OCI-LY7 (cell line): ENCODE measurements at regions of chr7 and their contacts with region 1.

Region 1: DNA sequence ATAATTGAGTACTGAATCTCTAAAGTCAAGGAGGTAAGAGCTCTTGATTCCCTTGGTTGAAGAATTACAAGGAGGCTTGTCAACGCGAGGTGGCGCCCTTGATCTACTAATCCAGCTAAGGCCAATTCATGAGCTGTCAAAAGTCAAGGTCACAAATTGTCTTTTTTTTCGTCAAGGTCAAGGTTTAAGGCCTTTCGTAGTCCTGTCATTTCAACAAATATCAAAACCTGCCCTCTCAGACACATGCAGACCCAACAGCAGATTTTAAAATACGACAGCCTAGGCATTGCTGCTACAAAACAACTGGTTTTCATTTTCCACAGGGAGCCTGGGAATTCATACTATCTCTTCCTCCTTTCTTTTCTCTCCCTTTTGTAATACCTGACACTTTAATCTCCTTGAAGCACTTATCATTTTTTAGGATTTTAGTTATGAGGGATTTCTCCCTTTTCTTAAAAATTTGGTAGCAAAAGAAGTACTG is 3.6 kb downstream of the HOXA13 start:
- DNase-seq: peak; percentile 74
- H3K4me3 ChIP-seq: no peak overlapping the region
- H3K27ac ChIP-seq: no peak overlapping the region
- H3K4me1 ChIP-seq: peaks cover 11% of the 10 kb centered on the region
- CTCF ChIP-seq: peak; percentile 96

Region 2: DNA sequence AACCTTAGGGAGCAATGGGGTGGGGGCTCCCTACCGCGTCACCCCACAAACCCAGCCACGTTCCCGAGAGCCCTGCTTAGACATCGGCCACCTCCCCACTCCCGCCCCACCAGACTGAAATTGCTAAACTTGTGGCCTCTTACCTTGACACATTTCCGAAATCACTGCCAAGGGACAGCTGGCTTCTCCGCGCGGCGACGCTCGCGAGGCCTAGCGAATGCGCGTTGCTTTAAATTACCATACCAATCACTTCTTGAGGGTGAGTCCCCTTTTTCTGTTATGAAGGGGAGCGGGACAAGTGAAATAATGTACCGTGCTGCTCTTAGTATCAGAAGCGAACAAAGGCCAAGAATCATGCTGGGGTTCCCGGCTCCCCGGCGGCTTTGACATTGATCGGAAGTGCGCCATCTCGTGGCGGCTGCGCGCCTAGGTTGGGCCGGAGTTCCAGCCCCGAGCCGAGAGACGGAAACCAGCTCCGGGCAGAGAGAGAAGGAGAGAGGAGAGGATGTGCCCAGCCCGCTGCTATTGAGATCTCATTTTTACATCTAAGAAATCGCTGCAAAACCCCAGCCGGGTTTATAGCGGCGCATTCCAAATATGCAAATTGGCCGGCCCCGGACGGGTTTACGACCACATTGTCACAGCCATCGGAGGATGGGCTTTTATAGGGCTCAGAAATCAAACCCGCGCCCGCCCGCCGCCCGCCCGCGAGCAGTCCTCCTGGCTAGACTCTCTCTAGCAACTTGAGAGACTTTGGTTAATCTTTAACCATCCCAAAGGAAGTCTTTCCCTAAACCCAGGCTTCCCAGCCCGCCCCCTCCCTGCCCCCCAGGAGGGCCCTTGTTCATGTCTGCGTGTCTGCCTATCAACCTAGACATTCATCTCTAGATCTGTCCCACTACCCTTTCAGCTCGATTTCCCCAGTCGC is 16.6 kb before region 1 on chr7:
- CTCF ChIA-PET with region 1: no interaction called
- POLR2A ChIA-PET with region 1: no interaction called
- intact Hi-C with region 1: no loop called
- DNase-seq: peak; percentile 64
- H3K4me3 ChIP-seq: peak overlapping the region; percentile 49
- H3K27ac ChIP-seq: no peak overlapping the region
- H3K4me1 ChIP-seq: no peaks in the 10 kb centered on the region
- CTCF ChIP-seq: peak; percentile 97

Region 3: GRCh38 chr7:27210441-27211083 is 14.2 kb after region 1 on chr7:
- CTCF ChIA-PET with region 1: no interaction called
- POLR2A ChIA-PET with region 1: no interaction called
- intact Hi-C with region 1: no loop called
- DNase-seq: peak; percentile 31
- H3K4me3 ChIP-seq: no peak overlapping the region
- H3K27ac ChIP-seq: no peak overlapping the region
- H3K4me1 ChIP-seq: no peaks in the 10 kb centered on the region
- CTCF ChIP-seq: peak; percentile 71

Region 4: GRCh38 chr7:27375958-27376357 is 179.6 kb after region 1 on chr7:
- CTCF ChIA-PET with region 1: no interaction called
- POLR2A ChIA-PET with region 1: no interaction called
- intact Hi-C with region 1: no loop called
- DNase-seq: no peak
- H3K4me3 ChIP-seq: no peak overlapping the region
- H3K27ac ChIP-seq: no peak overlapping the region
- H3K4me1 ChIP-seq: no peaks in the 10 kb centered on the region
- CTCF ChIP-seq: no peak

Region 5: DNA sequence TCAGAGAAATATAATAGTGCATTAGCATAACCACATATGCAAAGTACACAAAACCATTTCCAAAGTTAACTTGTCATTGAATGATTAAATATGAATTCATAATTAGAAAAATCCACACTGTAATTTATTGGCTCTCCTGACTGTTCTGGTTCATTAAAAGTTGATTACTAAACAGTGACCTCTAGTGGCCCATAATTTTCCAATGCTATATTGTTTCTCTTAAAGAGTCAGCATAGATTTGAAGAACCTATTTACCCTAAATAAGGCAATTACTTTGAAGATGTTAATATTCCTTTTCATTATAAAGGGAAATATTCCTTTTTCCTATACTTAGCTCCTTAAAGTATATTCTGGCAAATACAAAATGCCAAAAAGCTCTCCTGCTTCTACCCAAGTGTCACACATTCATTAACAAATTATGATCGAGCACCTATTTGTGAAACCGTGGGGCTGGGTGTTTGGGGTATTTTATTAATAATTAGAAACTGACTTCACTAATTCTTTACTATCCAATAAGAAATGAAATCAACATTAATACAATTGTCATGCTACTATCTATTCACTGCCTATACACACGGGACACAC is 380.1 kb after region 1 on chr7:
- CTCF ChIA-PET with region 1: no interaction called
- POLR2A ChIA-PET with region 1: no interaction called
- intact Hi-C with region 1: loop called (anchors 1 kb)
- DNase-seq: peak; percentile 35
- H3K4me3 ChIP-seq: no peak overlapping the region
- H3K27ac ChIP-seq: no peak overlapping the region
- H3K4me1 ChIP-seq: no peaks in the 10 kb centered on the region
- CTCF ChIP-seq: peak; percentile 92

Region 6: GRCh38 chr7:27605689-27606269 is 409.5 kb after region 1 on chr7:
- CTCF ChIA-PET with region 1: interaction called, 4 read pairs
- POLR2A ChIA-PET with region 1: interaction called, 4 read pairs
- intact Hi-C with region 1: loop called (anchors 5 kb)
- DNase-seq: peak; percentile 28
- H3K4me3 ChIP-seq: peak overlapping the region; percentile 9
- H3K27ac ChIP-seq: no peak overlapping the region
- H3K4me1 ChIP-seq: no peaks in the 10 kb centered on the region
- CTCF ChIP-seq: peak; percentile 86

Region 7: DNA sequence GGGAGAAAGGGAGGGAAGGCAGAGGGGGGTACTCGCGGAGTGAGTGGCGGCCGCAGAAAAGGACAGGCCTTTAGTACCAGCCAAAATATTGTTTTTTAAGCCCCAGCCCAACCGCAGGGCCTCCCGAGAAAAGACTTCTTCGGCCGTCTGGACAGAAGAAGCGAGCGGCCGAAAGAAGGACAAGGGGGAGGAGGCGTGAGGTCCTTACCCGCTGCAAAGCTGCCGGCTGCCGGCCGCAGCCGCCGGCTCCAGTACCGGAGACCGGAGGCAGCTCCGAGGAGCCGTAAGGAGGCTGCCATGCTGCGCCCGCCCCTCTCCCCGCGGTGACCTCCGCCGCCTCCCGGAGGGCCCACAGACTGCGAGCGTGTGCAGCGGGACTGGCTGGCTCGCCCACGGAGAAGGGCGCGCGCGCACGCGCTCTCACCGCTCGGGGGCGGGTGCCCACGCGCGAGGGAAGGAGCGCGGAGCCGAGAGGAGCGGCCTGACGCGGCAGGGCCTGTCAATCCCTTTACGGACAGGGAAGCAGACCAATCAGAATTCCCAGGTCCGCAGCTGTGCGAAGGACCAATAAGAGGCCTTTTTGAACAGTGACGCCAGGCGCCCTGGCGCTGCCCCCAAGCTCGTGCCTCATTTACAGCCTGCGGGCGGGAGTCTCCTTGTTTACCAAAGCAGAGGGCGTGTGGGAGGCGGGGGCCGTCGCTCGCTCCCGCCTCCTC is 466.3 kb after region 1 on chr7 and contains the start of gene HIBADH:
- CTCF ChIA-PET with region 1: no interaction called
- POLR2A ChIA-PET with region 1: no interaction called
- intact Hi-C with region 1: loop called (anchors 10 kb)
- DNase-seq: peak; percentile 99
- H3K4me3 ChIP-seq: peak within 1 kb of the TSS; percentile 74
- H3K27ac ChIP-seq: peak within 1 kb of the TSS; percentile 24
- H3K4me1 ChIP-seq: peaks cover 16% of the 10 kb centered on the region
- CTCF ChIP-seq: peak; percentile 10; the same call in 1 of the 2 replicates
- total RNA-seq, gene HIBADH: 22.8 and 24.0 TPM in 2 replicates

Region 8: DNA sequence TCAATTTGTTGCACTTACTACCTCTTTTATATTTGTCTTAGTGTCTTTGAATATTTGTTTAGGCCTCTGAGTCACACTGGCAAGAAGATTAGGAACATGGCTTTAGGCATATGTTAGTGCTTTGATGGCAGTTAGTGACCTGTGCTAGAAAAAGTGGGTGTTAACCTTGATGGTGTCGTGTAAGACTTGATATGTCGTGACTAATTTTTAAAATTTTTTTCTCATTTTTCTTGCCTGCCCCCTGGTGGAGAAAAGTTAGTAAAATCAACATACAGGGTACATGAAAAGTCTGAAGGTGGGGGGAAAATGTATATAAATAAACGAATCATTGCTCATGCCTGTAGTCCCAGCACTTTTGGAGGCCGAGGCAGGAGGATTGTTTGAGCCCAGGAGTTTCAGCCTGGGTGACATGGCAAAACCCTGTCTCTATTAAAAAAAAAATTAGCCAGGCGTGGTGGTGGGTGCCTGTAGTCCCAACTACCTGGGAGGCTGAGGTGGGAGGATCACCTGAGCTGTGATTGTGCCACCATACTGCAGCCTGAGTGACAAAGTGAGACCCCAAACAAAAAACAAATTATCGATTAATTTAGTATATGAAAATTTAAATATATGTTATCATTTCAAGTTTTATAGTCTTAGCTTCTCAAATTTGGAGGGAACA is 588.2 kb after region 1 on chr7:
- CTCF ChIA-PET with region 1: no interaction called
- POLR2A ChIA-PET with region 1: no interaction called
- intact Hi-C with region 1: loop called (anchors 2 kb)
- DNase-seq: peak; percentile 48
- H3K4me3 ChIP-seq: no peak overlapping the region
- H3K27ac ChIP-seq: no peak overlapping the region
- H3K4me1 ChIP-seq: no peaks in the 10 kb centered on the region
- CTCF ChIP-seq: peak; percentile 88

Region 9: GRCh38 chr7:28020302-28020940 is 824.1 kb after region 1 on chr7:
- CTCF ChIA-PET with region 1: no interaction called
- POLR2A ChIA-PET with region 1: no interaction called
- intact Hi-C with region 1: loop called (anchors 10 kb)
- DNase-seq: peak; percentile 67
- H3K4me3 ChIP-seq: no peak overlapping the region
- H3K27ac ChIP-seq: no peak overlapping the region
- H3K4me1 ChIP-seq: no peaks in the 10 kb centered on the region
- CTCF ChIP-seq: peak; percentile 88

Region 10: GRCh38 chr7:28078036-28078901 is 881.9 kb after region 1 on chr7:
- CTCF ChIA-PET with region 1: no interaction called
- POLR2A ChIA-PET with region 1: no interaction called
- intact Hi-C with region 1: loop called (anchors 5 kb)
- DNase-seq: peak; percentile 56
- H3K4me3 ChIP-seq: no peak overlapping the region
- H3K27ac ChIP-seq: no peak overlapping the region
- H3K4me1 ChIP-seq: no peaks in the 10 kb centered on the region
- CTCF ChIP-seq: peak; percentile 100